IMR-90 (cell line): ENCODE measurements at regions of chr1 and their contacts with region 1.

Region 1: GRCh38 chr1:12124693-12125421 is 41.9 kb upstream of the TNFRSF1B start:
- DNase-seq: peak; percentile 65
- ATAC-seq: peak; percentile 59
- H3K4me3 ChIP-seq: no peak overlapping the region
- H3K27ac ChIP-seq: no peak overlapping the region
- H3K4me1 ChIP-seq: peaks cover 13% of the 10 kb centered on the region
- H3K27me3 ChIP-seq: no peaks in the 10 kb centered on the region
- CTCF ChIP-seq: peak; percentile 98
- POLR2A ChIP-seq: 0 out of 2 replicates have a peak, but pooled peaks have one; percentile 48
- RAD21 ChIP-seq: peak; percentile 100

Region 2: DNA sequence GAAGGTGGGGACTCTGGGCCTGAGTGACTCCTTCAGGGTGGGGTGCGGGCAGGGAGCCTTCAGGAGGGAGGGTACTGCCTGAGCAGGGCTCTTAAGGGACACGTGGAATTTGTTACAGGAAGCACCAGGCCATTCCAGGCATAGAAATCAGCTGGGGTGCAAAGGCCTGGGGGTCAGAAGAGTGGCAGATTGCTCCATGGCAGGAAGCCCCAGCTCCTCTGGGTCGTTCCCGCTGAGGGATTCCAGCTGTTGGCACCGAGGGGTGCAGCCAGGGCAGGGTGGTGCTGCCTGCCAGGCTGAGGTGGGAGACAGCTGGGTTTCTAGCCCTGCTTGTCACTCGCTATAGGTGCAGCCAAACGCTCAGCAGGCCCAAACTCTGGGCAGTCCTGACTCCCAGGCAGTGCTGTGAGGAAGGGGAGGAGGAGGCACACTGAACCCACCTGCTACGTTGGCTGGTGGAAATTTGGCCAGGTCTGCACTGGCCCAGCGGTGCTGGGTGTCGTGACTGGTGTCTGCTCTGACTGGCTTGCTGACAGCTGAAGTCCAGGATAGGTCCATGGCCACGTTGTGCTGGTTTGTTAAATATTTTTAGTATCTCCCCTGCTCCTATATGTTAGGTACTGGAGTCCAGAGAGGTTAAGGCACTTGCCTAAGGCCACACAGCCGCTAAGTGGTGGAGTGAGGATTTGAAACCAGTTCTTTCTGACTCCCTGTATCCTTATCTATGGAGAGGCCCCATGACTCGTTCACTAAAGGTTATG is 61.2 kb after region 1 on chr1:
- CTCF ChIA-PET with region 1: interaction called, 10 read pairs
- POLR2A ChIA-PET with region 1: no interaction called
- dilution Hi-C with region 1: no loop called
- in situ Hi-C with region 1: no loop called
- intact Hi-C with region 1: loop called (anchors 1 kb)
- DNase-seq: no peak
- ATAC-seq: peak; percentile 30
- H3K4me3 ChIP-seq: no peak overlapping the region
- H3K27ac ChIP-seq: peak overlapping the region; percentile 69
- H3K4me1 ChIP-seq: peaks cover 32% of the 10 kb centered on the region
- H3K27me3 ChIP-seq: no peaks in the 10 kb centered on the region
- CTCF ChIP-seq: no peak
- POLR2A ChIP-seq: no peak
- RAD21 ChIP-seq: no peak

Region 3: GRCh38 chr1:12208764-12209494 is 84.1 kb after region 1 on chr1:
- CTCF ChIA-PET with region 1: interaction called, 34 read pairs
- POLR2A ChIA-PET with region 1: interaction called, 3 read pairs
- dilution Hi-C with region 1: no loop called
- in situ Hi-C with region 1: loop called (anchors 5 kb)
- intact Hi-C with region 1: loop called (anchors 1 kb)
- DNase-seq: peak; percentile 68
- ATAC-seq: peak; percentile 97
- H3K4me3 ChIP-seq: no peak overlapping the region
- H3K27ac ChIP-seq: no peak overlapping the region
- H3K4me1 ChIP-seq: no peaks in the 10 kb centered on the region; the same call in 1 of the 2 replicates
- H3K27me3 ChIP-seq: peaks cover 3% of the 10 kb centered on the region; the same call in 1 of the 2 replicates
- CTCF ChIP-seq: peak; percentile 92
- POLR2A ChIP-seq: peak; percentile 54; the same call in 1 of the 2 replicates
- RAD21 ChIP-seq: peak; percentile 98

Region 4: GRCh38 chr1:12249181-12249580 is 124.3 kb after region 1 on chr1:
- CTCF ChIA-PET with region 1: no interaction called
- POLR2A ChIA-PET with region 1: no interaction called
- dilution Hi-C with region 1: no loop called
- in situ Hi-C with region 1: no loop called
- intact Hi-C with region 1: no loop called
- DNase-seq: peak; percentile 58
- ATAC-seq: peak; percentile 70
- H3K4me3 ChIP-seq: no peak overlapping the region
- H3K27ac ChIP-seq: no peak overlapping the region
- H3K4me1 ChIP-seq: 0 out of 2 replicates have a peak, but pooled peaks cover 3% of the 10 kb centered on the region
- H3K27me3 ChIP-seq: no peaks in the 10 kb centered on the region
- CTCF ChIP-seq: no peak
- POLR2A ChIP-seq: no peak
- RAD21 ChIP-seq: no peak

Region 5: DNA sequence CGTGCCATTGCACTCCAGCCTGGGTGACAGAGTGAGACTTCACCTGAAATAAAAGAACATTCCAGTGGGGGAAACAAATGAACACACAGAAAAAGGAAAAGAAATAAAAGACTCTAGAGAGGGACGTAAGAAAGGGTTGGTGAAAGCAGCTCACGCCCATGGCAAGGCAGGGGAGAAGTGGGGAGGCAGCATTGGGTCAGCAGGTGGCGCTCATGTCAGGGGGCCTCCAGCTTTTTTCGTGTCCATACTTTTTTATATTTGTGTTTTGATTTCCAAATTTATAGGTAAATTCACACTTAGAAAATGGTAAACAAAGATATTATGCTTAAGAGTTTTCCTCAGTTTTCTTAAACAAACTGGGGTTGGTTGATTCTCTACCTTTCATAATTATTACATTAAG is 150.5 kb after region 1 on chr1:
- CTCF ChIA-PET with region 1: interaction called, 3 read pairs
- POLR2A ChIA-PET with region 1: no interaction called
- dilution Hi-C with region 1: no loop called
- in situ Hi-C with region 1: no loop called
- intact Hi-C with region 1: loop called (anchors 1 kb)
- DNase-seq: no peak
- ATAC-seq: peak; percentile 57; the same call in 1 of the 2 replicates
- H3K4me3 ChIP-seq: no peak overlapping the region
- H3K27ac ChIP-seq: no peak overlapping the region
- H3K4me1 ChIP-seq: no peaks in the 10 kb centered on the region
- H3K27me3 ChIP-seq: no peaks in the 10 kb centered on the region
- CTCF ChIP-seq: peak; percentile 59
- POLR2A ChIP-seq: no peak
- RAD21 ChIP-seq: peak; percentile 57

Region 6: DNA sequence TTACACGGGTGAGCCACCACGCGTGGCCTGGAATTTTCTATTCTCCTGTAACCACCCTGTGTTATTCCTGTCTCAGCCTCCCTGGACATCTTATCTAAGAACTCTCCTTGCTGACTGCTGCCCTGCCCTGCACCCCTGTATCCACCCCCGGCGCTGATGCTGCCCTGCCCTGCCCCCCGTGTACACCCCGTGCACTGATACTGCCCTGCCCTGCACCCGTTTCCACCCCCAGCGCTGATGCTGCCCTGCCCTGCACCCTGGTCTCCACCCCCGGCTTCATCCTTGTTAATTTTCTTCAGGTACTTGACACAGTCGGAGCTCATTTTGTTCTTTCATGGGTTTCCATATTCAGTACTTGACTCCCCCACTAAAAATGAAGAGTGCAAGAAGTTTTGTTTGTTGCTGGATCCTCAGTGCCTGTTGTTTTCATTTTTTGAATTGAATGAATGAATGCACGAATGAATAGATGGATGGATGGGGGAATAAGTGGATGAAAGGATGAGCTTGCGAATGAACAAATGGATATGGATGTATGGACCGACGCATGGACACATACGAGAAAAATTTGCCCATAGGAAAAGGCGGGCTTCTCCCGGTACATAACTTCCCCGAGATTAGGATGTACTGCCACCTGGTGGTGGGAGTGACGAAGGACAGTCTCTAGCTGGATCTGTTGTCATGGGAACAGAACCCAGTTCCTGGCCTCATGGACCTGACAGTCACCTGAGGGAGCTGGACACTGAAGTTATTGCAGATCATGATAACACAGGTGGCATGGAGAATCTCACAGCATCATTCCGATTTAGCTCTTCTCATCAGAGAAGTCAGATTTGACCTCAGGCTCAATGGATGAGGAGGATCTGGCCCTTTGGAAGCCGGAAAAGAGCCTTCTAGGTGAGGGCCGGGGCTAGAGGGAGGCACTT is 533.9 kb after region 1 on chr1:
- CTCF ChIA-PET with region 1: interaction called, 3 read pairs
- POLR2A ChIA-PET with region 1: no interaction called
- dilution Hi-C with region 1: no loop called
- in situ Hi-C with region 1: no loop called
- intact Hi-C with region 1: loop called (anchors 10 kb)
- DNase-seq: peak; percentile 76
- ATAC-seq: peak; percentile 98
- H3K4me3 ChIP-seq: no peak overlapping the region
- H3K27ac ChIP-seq: no peak overlapping the region
- H3K4me1 ChIP-seq: no peaks in the 10 kb centered on the region
- H3K27me3 ChIP-seq: peaks cover 21% of the 10 kb centered on the region
- CTCF ChIP-seq: peak; percentile 98
- POLR2A ChIP-seq: 0 out of 2 replicates have a peak, but pooled peaks have one; percentile 31
- RAD21 ChIP-seq: peak; percentile 97